Caco-2 (cell line): ENCODE measurements at regions of chr17 and their contacts with region 1.

Region 1: DNA sequence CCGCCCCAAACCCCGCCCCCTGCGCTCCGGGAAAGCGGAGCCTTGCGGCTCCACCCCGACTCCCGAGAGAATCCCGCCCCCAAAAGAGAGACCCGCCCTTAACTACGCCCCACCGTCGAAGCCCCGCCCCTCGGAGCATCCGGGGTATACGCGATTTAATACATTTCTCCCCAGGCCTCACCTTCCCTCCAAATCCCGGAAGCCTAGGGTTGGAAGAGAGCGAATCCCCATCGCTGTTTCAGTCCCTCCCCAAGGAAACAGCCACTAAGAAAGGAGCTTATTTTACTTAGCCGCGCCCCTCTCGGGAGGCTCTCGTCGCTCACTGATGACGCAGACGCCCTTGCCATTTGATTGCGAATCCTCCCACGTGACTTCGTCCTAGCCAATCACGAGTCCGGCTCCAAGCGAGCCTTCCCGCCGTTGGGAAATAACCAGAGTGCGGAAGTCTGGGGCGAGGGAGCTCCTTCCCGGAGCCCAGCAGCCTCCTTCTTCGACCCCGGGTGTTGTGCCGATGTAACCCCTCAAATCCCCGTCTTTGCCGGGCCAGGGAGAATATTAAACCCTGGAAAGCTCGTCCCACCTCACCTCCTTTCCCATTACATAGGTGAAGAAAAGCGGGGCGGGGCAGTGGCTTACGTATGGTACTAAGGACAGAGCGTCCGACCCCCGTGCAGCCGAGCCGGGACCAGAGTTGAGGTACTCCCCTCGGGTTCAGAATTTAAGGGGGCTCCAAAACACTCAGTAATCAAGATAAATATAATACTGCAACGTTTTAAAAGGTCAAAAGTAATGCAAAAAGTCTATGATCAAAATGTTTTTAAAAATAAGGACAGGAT is 462 bp upstream of the FDXR start:
- DNase-seq: peak; percentile 99 to 100
- H3K4me3 ChIP-seq: peak overlapping the region; percentile 83
- H3K4me3 Mint-ChIP-seq: peak overlapping the region; percentile 84
- H3K27ac Mint-ChIP-seq: peak overlapping the region; percentile 55
- H3K4me1 ChIP-seq: peaks cover 12% of the 10 kb centered on the region
- H3K4me1 Mint-ChIP-seq: peaks cover 21% of the 10 kb centered on the region
- H3K27me3 ChIP-seq: no peaks in the 10 kb centered on the region
- H3K27me3 Mint-ChIP-seq: no peaks in the 10 kb centered on the region
- CTCF ChIP-seq: no peak

Region 2: DNA sequence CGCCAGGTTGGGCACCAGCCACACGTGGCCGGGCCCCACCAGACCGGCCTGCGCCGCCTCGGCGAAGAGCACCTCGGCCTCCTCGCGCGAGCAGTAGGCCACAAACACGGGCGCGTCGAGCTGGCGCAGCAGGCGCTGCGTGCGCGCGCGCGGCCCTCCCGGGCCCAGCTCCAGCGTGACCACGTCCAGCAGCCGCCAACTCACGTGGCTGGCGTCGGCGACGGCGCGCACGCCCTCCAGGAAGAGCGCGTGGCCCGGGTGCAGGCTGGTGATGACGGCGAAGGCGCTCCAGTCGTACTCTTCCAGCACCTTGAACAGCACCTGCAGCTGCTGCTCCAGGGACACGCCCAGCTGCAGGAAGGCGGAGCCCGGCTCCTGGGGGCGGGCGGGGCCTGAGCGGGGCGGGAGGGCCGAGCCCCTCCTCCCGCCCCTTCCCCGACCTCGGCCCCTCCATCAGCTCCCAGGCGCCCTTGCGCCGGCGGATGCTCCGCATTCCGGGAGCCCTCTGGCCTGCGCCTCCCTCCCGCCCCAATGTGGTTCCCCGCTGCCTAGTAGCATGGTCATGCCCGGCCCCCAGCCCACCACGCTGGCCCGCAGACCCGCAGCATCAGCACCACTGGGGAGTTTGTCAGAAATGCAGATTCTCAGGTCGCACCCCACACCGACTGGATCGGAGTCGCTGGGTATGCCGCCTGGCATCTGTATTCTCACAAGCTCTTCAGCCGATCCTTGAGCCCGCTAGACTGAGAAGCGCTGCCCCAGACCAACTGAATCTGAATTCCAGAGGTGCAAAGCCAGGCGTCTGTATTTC is 20.8 kb before region 1 on chr17:
- CTCF ChIA-PET with region 1: interaction called, 17 read pairs
- POLR2A ChIA-PET with region 1: interaction called, 58 read pairs
- intact Hi-C with region 1: loop called (anchors 1 kb)
- DNase-seq: peak; percentile 93 to 94
- H3K4me3 ChIP-seq: peak overlapping the region; percentile 62
- H3K4me3 Mint-ChIP-seq: peak overlapping the region; percentile 82
- H3K27ac Mint-ChIP-seq: peak overlapping the region; percentile 63
- H3K4me1 ChIP-seq: peaks cover 8% of the 10 kb centered on the region
- H3K4me1 Mint-ChIP-seq: peaks cover 7% of the 10 kb centered on the region
- H3K27me3 ChIP-seq: 0 out of 2 replicates have a peak, but pooled peaks cover 2% of the 10 kb centered on the region
- H3K27me3 Mint-ChIP-seq: peaks cover 16% of the 10 kb centered on the region
- CTCF ChIP-seq: no peak

Region 3: GRCh38 chr17:74923533-74924249 is 50.4 kb after region 1 on chr17:
- CTCF ChIA-PET with region 1: interaction called, 10 read pairs
- POLR2A ChIA-PET with region 1: no interaction called
- intact Hi-C with region 1: no loop called
- DNase-seq: peak; percentile 62 to 89
- H3K4me3 ChIP-seq: peak overlapping the region; percentile 49
- H3K4me3 Mint-ChIP-seq: peak overlapping the region; percentile 71
- H3K27ac Mint-ChIP-seq: no peak overlapping the region
- H3K4me1 ChIP-seq: peaks cover 6% of the 10 kb centered on the region; the same call in 1 of the 2 replicates
- H3K4me1 Mint-ChIP-seq: no peaks in the 10 kb centered on the region
- H3K27me3 ChIP-seq: peaks cover 1% of the 10 kb centered on the region; the same call in 1 of the 2 replicates
- H3K27me3 Mint-ChIP-seq: peaks cover 25% of the 10 kb centered on the region
- CTCF ChIP-seq: peak; percentile 88 to 97

Region 4: DNA sequence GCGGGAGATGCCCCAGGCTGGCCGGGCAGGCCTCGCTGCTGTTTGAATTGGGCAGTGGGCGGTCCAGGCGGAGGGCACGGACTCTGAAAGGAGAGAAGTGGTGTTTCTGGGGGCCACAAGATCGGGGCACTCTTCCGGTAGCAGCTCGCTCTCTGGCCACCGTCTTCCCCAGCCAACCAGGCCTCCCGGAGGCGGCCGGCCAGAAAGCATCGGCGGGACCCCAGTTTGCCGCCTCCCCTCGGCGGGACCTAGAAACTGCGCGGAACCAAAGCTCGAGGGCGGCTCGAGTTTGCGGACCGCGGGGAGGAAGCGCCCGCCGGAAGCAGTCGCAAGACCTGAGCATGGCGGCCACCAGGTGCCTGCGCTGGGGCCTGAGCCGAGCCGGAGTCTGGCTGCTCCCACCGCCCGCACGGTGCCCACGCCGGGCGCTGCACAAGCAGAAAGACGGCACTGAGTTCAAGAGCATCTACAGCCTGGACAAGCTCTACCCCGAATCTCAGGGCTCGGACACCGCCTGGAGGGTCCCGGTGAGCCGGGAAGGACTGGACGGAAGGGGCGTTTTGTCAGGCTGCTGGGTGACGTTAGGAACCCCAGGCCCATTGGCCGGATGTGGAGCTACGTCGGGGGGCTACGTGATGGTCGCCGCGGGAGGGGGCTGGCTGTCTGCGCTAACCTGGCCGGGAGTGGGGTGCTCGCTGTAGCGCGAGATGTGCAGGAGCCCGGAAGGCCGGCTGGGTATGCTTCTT is 139.3 kb after region 1 on chr17 and contains the start of gene MRPL58:
- CTCF ChIA-PET with region 1: interaction called, 5 read pairs
- POLR2A ChIA-PET with region 1: interaction called, 13 read pairs
- intact Hi-C with region 1: no loop called
- DNase-seq: peak; percentile 88 to 92
- H3K4me3 ChIP-seq: peak within 1 kb of the TSS; percentile 84
- H3K4me3 Mint-ChIP-seq: peak within 1 kb of the TSS; percentile 82
- H3K27ac Mint-ChIP-seq: peak within 1 kb of the TSS; percentile 84
- H3K4me1 ChIP-seq: peaks cover 3% of the 10 kb centered on the region; the same call in 1 of the 2 replicates
- H3K4me1 Mint-ChIP-seq: peaks cover 29% of the 10 kb centered on the region
- H3K27me3 ChIP-seq: no peaks in the 10 kb centered on the region
- H3K27me3 Mint-ChIP-seq: no peaks in the 10 kb centered on the region
- CTCF ChIP-seq: peak; percentile 68 to 79
- total RNA-seq, gene MRPL58: 61.0 and 61.8 TPM in 2 replicates